ENCODE measurements at regions of chr17 and their contacts with region 1.

Region 1: GRCh38 chr17:81428948-81429774 is 33.9 kb downstream of the BAHCC1 start:
- DNase-seq: no peak
- H3K4me3 ChIP-seq: no peak overlapping the region
- CTCF ChIP-seq: no peak

Region 2: DNA sequence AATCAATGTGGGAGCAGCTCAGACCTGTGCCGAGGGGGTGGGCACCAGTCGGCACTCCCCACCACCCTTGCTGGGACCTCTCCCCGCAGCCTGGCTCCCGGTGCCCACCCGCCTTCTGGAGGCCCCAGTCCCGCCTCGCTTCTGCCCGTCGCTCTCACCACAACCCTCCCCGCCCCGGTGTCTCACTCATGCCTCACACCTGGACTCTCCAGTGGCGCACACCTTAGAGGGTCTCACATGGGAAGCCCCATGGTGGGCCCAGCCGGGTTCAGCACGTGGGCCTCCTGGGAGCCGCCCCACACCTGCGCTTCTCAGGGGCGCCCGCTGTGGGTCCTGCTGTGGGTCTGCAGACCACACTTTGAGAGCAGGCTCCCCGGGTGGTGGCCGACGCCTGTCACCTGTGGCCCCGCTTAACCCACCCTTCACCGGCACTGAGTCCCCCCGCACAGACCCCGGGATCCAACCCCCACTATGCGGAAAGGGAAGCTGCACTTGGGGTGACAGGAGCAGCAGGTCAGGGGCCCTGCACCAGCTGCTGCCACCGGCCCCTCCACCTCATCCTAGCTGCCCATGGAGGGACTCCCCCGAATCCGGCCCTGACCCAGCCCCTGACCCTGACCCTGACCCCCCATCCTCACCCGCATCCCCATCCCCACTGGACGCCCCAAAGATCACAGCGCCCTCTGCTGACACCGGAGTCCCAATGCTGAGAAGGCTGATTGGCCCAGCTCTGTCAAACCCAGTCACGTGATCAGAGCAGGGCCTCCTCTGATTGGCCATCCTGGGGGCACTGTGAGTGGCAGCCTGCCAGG is 106.7 kb before region 1 on chr17:
- CTCF ChIA-PET with region 1: no interaction called
- POLR2A ChIA-PET with region 1: no interaction called
- DNase-seq: no peak
- H3K4me3 ChIP-seq: no peak overlapping the region
- CTCF ChIP-seq: peak; percentile 24

Region 3: DNA sequence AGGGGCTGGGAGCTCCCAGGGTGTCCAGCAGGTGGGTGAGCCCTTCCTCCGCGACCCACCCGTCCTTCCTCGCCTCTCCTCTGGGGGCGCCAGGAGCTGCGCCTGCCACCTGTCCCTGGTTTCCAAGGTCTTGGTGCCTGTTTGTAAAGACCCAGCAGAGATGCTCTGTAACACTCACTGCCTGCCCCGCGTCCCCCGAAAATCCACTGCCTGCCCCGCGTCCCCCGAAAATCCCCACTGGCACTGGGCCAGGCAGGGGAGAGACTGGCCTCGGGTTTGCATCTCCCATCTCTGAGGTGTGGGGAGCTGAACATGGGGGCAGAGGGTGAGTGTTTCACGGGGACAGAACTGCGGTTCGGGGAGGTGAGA is 11.7 kb after region 1 on chr17:
- CTCF ChIA-PET with region 1: interaction called, 22 read pairs
- POLR2A ChIA-PET with region 1: no interaction called
- DNase-seq: no peak
- H3K4me3 ChIP-seq: no peak overlapping the region
- CTCF ChIP-seq: peak; percentile 67